ENCODE measurements at regions of chr13 and their contacts with region 1.

Region 1: GRCh38 chr13:29508130-29508875 is 87.2 kb downstream of the SLC7A1 start:
- DNase-seq: peak; percentile 84
- H3K4me3 ChIP-seq: no peak overlapping the region
- H3K27ac ChIP-seq: no peak overlapping the region
- H3K4me1 ChIP-seq: no peaks in the 10 kb centered on the region
- H3K27me3 ChIP-seq: peaks cover 4 to 7% of the 10 kb centered on the region in 2 experiments
- CTCF ChIP-seq: peak; percentile 94 to 97
- POLR2A ChIP-seq: no peak

Region 2: GRCh38 chr13:29496240-29496712 is 12.0 kb before region 1 on chr13:
- CTCF ChIA-PET with region 1: interaction called, 26 read pairs
- POLR2A ChIA-PET with region 1: no interaction called
- dilution Hi-C with region 1: no loop called
- intact Hi-C with region 1: no loop called
- DNase-seq: no peak
- H3K4me3 ChIP-seq: no peak overlapping the region
- H3K27ac ChIP-seq: no peak overlapping the region
- H3K4me1 ChIP-seq: no peaks in the 10 kb centered on the region
- H3K27me3 ChIP-seq: peaks cover 3 to 8% of the 10 kb centered on the region in 2 experiments
- CTCF ChIP-seq: no peak
- POLR2A ChIP-seq: no peak

Region 3: DNA sequence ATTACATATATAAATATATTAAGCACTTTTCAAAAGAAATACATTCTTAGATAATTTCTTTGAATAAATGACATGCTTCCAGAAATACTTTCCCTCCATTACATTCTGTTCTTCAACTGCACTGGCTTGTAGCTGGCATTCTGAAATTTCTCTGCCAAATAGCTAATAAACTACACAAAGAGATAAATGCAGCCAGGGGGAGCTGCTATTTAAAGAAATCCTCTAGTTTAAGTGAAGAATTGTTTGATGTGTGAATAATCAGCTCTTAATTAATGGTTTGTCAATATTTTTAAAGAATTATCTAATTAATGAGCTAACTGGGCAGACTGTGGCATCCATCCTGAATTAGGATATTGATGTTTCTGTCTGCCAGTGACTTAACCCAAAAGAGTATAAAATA is 56.5 kb after region 1 on chr13:
- CTCF ChIA-PET with region 1: interaction called, 19 read pairs
- POLR2A ChIA-PET with region 1: no interaction called
- dilution Hi-C with region 1: no loop called
- intact Hi-C with region 1: no loop called
- DNase-seq: peak; percentile 37
- H3K4me3 ChIP-seq: no peak overlapping the region
- H3K27ac ChIP-seq: peak overlapping the region; percentile 73
- H3K4me1 ChIP-seq: peaks cover 44% of the 10 kb centered on the region
- H3K27me3 ChIP-seq: no peaks in the 10 kb centered on the region
- CTCF ChIP-seq: no peak
- POLR2A ChIP-seq: no peak

Region 4: DNA sequence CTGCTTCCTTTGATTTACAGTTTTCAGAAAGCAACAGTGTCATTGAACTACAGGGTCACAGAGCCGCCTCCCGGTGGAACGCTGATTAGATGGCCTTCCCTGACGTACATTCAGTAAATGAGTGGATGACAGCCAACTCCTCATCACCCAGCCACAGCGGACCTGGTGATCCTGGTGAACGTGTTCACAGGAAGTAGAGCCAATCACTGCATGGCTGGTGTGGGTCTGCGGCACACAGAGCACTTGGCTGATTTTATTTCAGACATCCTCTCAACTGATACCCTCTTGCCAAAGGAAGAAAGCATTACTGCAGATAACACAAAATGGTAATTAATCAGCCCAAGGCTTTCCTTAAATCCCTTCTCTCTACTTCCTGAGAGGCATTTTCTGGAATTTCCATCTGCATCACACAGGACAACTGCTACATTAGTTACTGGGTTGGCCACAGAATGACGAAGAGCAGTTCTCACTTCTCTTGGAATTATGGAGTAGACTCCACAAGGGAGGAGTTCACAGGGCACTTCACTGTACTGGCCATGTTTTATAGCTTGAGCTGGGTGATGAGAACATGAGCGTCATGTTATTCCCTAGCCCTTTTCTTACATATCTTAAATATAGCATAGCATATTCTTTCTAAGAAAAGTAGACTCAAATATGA is 171.2 kb after region 1 on chr13:
- CTCF ChIA-PET with region 1: interaction called, 11 read pairs
- POLR2A ChIA-PET with region 1: no interaction called
- dilution Hi-C with region 1: no loop called
- intact Hi-C with region 1: no loop called
- DNase-seq: peak; percentile 87
- H3K4me3 ChIP-seq: no peak overlapping the region
- H3K27ac ChIP-seq: no peak overlapping the region
- H3K4me1 ChIP-seq: no peaks in the 10 kb centered on the region
- H3K27me3 ChIP-seq: peaks cover 7 to 8% of the 10 kb centered on the region in 2 experiments
- CTCF ChIP-seq: no peak
- POLR2A ChIP-seq: no peak

Region 5: DNA sequence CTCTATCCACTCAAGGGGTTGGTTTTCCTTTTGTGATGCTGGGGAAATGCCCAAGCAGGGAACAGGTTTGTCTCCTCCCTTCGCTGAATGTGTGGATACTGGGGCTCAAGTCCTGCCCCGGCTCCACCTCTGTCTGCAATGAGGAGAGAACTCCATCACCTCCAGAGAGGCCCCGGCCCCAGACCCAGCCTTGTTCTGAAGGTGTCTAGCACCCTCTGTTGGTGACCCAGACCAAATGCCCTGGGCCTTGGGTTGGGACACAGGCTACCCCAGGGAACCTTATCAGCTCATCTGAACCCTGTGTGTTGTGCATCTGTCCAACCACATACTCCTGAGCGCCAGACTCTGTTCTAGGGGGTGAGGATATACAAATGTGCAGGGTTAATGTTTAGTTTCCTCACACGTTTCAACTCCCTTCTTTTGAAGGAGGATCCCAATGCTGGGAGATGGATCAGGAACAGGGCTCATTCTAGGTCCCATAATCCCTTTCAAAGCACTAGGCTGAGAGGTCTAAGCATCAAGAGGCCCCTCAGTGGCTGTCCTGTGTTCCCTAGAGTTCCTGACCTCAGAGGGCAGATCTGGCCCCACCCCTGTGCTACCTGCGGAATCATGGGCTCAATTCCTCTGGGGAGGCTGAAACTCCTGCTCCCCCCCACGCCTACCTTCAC is 199.7 kb after region 1 on chr13:
- CTCF ChIA-PET with region 1: interaction called, 301 read pairs
- POLR2A ChIA-PET with region 1: interaction called, 4 read pairs
- dilution Hi-C with region 1: no loop called
- intact Hi-C with region 1: loop called (anchors 1 kb)
- DNase-seq: peak; percentile 46
- H3K4me3 ChIP-seq: no peak overlapping the region
- H3K27ac ChIP-seq: no peak overlapping the region
- H3K4me1 ChIP-seq: peaks cover 5% of the 10 kb centered on the region
- H3K27me3 ChIP-seq: peaks cover 11 to 14% of the 10 kb centered on the region in 2 experiments
- CTCF ChIP-seq: peak; percentile 80 to 89
- POLR2A ChIP-seq: no peak

Region 6: DNA sequence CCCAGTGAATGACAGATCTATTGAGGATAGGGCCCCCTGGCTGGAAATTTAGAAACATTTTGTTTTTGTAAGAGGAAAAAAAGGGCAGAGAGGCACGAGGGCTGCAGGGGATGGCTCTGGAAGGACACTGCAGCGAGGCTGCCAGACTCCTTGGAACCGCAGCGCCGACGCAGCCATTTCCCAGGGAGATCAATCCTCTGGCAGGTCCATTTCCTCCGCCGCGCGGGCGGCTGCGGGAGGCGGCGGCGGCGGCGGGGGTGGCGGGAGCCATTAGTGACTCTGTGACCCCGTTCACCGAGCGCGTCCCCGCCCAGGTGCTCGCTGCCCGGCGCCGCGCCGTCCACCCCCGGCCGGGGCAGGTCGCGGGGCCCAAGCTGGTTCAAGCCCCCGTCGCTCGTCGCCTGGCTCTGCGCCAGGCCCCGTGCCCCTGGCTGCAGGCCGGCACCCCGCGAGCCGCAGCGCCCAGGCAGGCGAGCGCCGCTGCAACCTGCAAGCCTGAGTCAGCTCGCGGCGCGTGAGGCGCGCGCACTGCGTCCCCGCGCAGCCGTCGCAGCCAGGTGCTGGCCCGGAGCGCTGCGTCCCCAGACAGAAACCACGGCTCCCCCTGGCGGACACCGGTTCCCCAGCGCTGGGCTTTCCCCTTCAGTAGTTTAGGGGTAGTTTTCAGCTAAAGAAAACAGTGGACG is 606.4 kb after region 1 on chr13:
- CTCF ChIA-PET with region 1: interaction called, 17 read pairs
- POLR2A ChIA-PET with region 1: no interaction called
- dilution Hi-C with region 1: no loop called
- intact Hi-C with region 1: loop called (anchors 1 kb)
- DNase-seq: peak; percentile 80
- H3K4me3 ChIP-seq: peak overlapping the region; percentile 5 to 45 (median 40)
- H3K27ac ChIP-seq: no peak overlapping the region
- H3K4me1 ChIP-seq: peaks cover 3% of the 10 kb centered on the region
- H3K27me3 ChIP-seq: peaks cover 38 to 47% of the 10 kb centered on the region in 2 experiments
- CTCF ChIP-seq: peak; percentile 94 to 95
- POLR2A ChIP-seq: no peak